CD4-positive, alpha-beta memory T cell (primary cell): ENCODE measurements at regions of chr6 and their contacts with region 1.

Region 1: DNA sequence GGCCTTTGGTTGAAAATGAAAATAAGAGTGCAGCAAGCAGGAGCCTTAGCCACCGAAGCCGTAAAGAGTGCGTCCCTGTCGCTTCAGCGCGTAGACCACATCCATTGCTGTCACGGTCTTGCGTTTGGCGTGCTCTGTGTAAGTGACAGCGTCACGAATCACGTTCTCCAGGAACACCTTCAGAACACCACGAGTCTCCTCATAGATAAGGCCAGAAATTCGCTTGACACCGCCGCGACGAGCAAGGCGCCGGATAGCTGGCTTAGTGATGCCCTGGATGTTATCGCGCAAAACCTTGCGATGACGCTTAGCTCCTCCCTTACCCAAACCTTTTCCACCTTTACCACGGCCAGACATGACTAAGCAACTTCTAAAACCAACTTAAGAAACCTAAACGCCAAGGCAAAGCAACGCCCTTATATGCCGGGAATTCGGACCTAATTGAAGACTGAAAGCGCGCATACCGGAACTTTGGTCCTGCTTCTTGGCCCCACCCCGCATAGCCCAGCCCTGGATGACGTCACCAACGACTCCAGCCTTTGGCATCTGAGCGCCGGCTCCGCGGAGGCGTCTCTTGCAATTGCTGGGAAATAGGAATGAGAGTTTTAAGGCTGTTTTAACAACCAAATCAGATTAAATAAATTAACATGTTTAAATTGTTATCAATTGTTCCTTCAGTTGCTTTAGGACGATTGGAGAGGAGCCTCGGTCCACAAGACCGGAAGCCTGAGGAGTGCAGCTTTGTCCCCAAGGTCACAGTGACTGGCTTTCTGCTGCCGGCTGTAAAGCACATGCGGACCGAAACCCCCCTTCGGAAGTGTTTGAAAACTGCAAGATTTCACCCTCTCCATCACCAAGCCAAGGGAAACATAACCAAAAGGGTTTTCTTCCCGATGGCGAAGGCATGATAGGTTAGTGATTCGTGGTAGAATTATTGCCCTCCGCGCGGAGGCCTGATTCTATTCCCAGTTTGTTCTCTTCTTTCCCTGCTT is 79.6 kb upstream of the BTN3A2 start:
- DNase-seq: peak; percentile 91 to 98 (median 95)
- H3K4me3 ChIP-seq: peak overlapping the region; percentile 51 to 75
- H3K4me3 Mint-ChIP-seq: peak overlapping the region; percentile 83 to 95 (median 91)
- H3K27ac ChIP-seq: peak overlapping the region; percentile 81
- H3K27ac Mint-ChIP-seq: peak overlapping the region; percentile 95 to 99 (median 99)
- H3K4me1 ChIP-seq: peaks cover 13% of the 10 kb centered on the region
- H3K4me1 Mint-ChIP-seq: peaks cover 8 to 34% (median 19%) of the 10 kb centered on the region in 4 donors
- H3K27me3 ChIP-seq: no peaks in the 10 kb centered on the region
- H3K27me3 Mint-ChIP-seq: peaks cover 2 to 9% of the 10 kb centered on the region in 2 donors

Region 2: DNA sequence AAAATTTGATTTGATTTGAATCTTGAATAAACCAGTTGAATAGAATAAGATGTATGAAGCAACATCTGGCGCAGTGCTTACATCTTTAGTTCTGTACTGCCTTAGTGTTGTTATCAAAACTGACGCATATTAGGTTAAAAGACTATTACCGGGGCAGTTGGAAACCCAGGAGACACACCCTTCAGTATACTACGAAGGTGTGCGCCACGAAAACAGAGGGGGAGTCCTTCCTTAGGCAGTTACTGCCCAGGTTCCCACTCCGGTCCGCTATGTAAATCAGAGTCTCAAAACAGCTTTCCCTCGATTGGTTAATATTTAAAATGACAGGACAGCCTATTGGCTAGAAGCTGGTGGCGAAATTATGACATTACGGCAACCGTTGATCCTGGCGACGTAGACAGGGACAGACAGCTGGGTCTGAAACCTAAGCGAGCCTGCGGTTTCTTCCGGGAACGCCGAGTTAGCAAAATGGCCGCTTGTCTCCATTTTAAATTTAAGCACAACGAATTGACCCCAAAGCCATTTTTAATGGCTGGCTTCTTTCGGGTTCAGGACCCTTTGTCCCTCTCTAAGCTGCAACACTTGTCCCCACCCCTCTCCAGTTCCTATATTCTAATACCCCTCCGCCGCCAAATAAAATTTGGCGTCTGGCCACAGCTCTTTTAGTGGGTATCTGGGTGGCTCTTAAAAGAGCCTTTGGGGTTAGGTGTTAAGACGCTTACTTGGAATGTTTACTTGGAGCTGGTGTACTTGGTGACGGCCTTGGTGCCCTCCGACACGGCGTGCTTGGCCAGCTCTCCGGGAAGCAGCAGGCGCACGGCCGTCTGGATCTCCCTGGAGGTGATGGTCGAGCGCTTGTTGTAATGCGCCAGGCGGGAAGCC is 162.4 kb before region 1 on chr6:
- CTCF ChIA-PET with region 1: no interaction called
- POLR2A ChIA-PET with region 1: interaction called, 72 read pairs
- intact Hi-C with region 1: loop called (anchors 1 kb)
- DNase-seq: peak; percentile 94 to 98 (median 98)
- H3K4me3 ChIP-seq: peak overlapping the region; percentile 87 to 98
- H3K4me3 Mint-ChIP-seq: peak overlapping the region; percentile 96 to 100 (median 100)
- H3K27ac ChIP-seq: peak overlapping the region; percentile 89
- H3K27ac Mint-ChIP-seq: peak overlapping the region; percentile 97 to 99 (median 99)
- H3K4me1 ChIP-seq: peaks cover 26% of the 10 kb centered on the region
- H3K4me1 Mint-ChIP-seq: peaks cover 20 to 54% (median 30%) of the 10 kb centered on the region in 4 donors
- H3K27me3 ChIP-seq: no peaks in the 10 kb centered on the region
- H3K27me3 Mint-ChIP-seq: peaks cover 0 to 3% of the 10 kb centered on the region in 2 donors

Region 3: DNA sequence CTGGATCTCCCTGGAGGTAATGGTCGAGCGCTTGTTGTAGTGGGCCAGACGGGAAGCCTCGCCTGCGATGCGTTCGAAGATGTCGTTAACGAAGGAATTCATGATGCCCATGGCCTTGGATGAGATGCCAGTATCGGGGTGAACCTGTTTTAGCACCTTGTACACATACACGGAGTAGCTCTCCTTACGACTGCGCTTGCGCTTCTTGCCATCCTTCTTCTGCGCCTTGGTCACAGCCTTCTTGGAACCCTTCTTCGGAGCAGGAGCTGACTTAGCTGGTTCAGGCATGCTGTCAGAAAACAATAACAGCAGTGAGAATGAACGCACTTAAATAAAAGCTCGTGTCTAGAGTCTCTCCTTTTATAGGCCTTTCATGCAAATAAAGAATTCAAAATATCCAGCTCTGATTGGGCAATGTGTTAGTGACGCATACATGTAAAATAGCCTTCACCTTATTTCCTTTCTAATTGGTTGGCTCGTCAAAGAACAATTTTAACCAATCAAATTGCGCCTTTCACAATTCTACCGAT is 69.0 kb before region 1 on chr6:
- CTCF ChIA-PET with region 1: interaction called, 8 read pairs
- POLR2A ChIA-PET with region 1: interaction called, 175 read pairs
- intact Hi-C with region 1: loop called (anchors 1 kb)
- DNase-seq: peak; percentile 88 to 96 (median 94)
- H3K4me3 ChIP-seq: peak overlapping the region; percentile 75 to 85
- H3K4me3 Mint-ChIP-seq: no peak overlapping the region
- H3K27ac ChIP-seq: peak overlapping the region; percentile 82
- H3K27ac Mint-ChIP-seq: no peak overlapping the region
- H3K4me1 ChIP-seq: peaks cover 26% of the 10 kb centered on the region
- H3K4me1 Mint-ChIP-seq: peaks cover 0 to 5% (median 2%) of the 10 kb centered on the region in 4 donors
- H3K27me3 ChIP-seq: no peaks in the 10 kb centered on the region
- H3K27me3 Mint-ChIP-seq: no peaks in the 10 kb centered on the region

Region 4: DNA sequence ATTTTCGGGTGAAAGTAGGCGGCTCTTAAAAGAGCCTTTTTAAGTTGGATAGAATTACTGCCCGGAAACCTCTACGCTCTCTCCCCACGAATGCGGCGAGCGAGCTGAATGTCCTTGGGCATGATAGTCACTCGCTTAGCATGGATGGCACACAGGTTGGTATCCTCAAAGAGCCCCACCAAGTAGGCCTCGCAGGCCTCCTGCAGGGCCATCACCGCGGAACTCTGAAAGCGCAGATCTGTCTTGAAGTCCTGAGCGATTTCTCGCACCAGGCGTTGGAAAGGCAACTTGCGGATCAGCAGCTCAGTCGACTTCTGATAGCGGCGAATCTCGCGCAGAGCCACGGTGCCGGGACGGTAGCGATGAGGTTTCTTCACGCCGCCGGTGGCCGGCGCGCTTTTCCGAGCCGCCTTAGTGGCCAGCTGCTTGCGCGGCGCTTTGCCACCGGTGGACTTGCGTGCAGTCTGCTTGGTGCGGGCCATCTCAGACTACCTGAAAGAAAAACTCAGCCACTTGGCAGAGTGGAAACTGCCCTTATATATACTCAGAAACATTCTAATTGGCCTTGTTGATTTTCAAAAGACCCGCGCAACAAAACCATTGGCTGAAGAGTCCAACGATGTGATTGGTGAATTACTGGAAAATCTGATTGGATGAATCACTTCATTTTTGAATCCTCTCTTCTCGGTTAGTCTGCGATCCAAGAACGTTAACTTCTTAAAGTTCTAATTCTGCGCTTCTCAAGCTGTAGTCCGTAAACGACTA is 14.4 kb before region 1 on chr6:
- CTCF ChIA-PET with region 1: interaction called, 39 read pairs
- POLR2A ChIA-PET with region 1: interaction called, 497 read pairs
- intact Hi-C with region 1: loop called (anchors 1 kb)
- DNase-seq: peak; percentile 84 to 87 (median 85)
- H3K4me3 ChIP-seq: peak overlapping the region; percentile 53 to 65
- H3K4me3 Mint-ChIP-seq: peak overlapping the region in 1 of 8 donors; percentile 85
- H3K27ac ChIP-seq: peak overlapping the region; percentile 83
- H3K27ac Mint-ChIP-seq: peak overlapping the region in 5 of 7 donors; percentile 68 to 97 (median 82)
- H3K4me1 ChIP-seq: peaks cover 31% of the 10 kb centered on the region
- H3K4me1 Mint-ChIP-seq: peaks cover 0 to 22% (median 15%) of the 10 kb centered on the region in 4 donors
- H3K27me3 ChIP-seq: no peaks in the 10 kb centered on the region
- H3K27me3 Mint-ChIP-seq: no peaks in the 10 kb centered on the region

Region 5: GRCh38 chr6:26473758-26474438 is 188.5 kb after region 1 on chr6:
- CTCF ChIA-PET with region 1: no interaction called
- POLR2A ChIA-PET with region 1: interaction called, 11 read pairs
- intact Hi-C with region 1: no loop called
- DNase-seq: peak; percentile 91 to 94 (median 92)
- H3K4me3 ChIP-seq: peak overlapping the region; percentile 63 to 73
- H3K4me3 Mint-ChIP-seq: peak overlapping the region; percentile 84 to 99 (median 94)
- H3K27ac ChIP-seq: peak overlapping the region; percentile 81
- H3K27ac Mint-ChIP-seq: peak overlapping the region; percentile 99 to 100 (median 99)
- H3K4me1 ChIP-seq: peaks cover 52% of the 10 kb centered on the region
- H3K4me1 Mint-ChIP-seq: peaks cover 37 to 72% (median 51%) of the 10 kb centered on the region in 4 donors
- H3K27me3 ChIP-seq: no peaks in the 10 kb centered on the region
- H3K27me3 Mint-ChIP-seq: no peaks in the 10 kb centered on the region

Region 6: GRCh38 chr6:27146706-27147505 is 861.5 kb after region 1 on chr6:
- CTCF ChIA-PET with region 1: no interaction called
- POLR2A ChIA-PET with region 1: interaction called, 26 read pairs
- intact Hi-C with region 1: no loop called
- DNase-seq: peak; percentile 85 to 96 (median 94)
- H3K4me3 ChIP-seq: peak overlapping the region; percentile 76 to 77
- H3K4me3 Mint-ChIP-seq: no peak overlapping the region
- H3K27ac ChIP-seq: peak overlapping the region; percentile 97
- H3K27ac Mint-ChIP-seq: no peak overlapping the region
- H3K4me1 ChIP-seq: peaks cover 22% of the 10 kb centered on the region
- H3K4me1 Mint-ChIP-seq: peaks cover 10 to 20% (median 13%) of the 10 kb centered on the region in 4 donors
- H3K27me3 ChIP-seq: no peaks in the 10 kb centered on the region
- H3K27me3 Mint-ChIP-seq: no peaks in the 10 kb centered on the region

Region 7: GRCh38 chr6:27293436-27294098 is 1008.1 kb after region 1 on chr6:
- CTCF ChIA-PET with region 1: no interaction called
- POLR2A ChIA-PET with region 1: no interaction called
- intact Hi-C with region 1: no loop called
- DNase-seq: no peak
- H3K4me3 ChIP-seq: no peak overlapping the region
- H3K4me3 Mint-ChIP-seq: peak overlapping the region in 3 of 8 donors; percentile 11 to 48 (median 25)
- H3K27ac ChIP-seq: no peak overlapping the region
- H3K27ac Mint-ChIP-seq: peak overlapping the region in 4 of 7 donors; percentile 29 to 79 (median 38)
- H3K4me1 ChIP-seq: no peaks in the 10 kb centered on the region
- H3K4me1 Mint-ChIP-seq: peaks cover 0 to 3% (median 0%) of the 10 kb centered on the region in 4 donors
- H3K27me3 ChIP-seq: peaks cover 67% of the 10 kb centered on the region
- H3K27me3 Mint-ChIP-seq: peaks cover 79 to 82% of the 10 kb centered on the region in 2 donors